BJ (cell line): ENCODE measurements at regions of chr21 and their contacts with region 1.

Region 1: GRCh38 chr21:26307640-26308039 is 137.1 kb upstream of the APP start:
- DNase-seq: no peak
- H3K4me3 ChIP-seq: no peak overlapping the region
- H3K27me3 ChIP-seq: no peaks in the 10 kb centered on the region
- CTCF ChIP-seq: no peak

Region 2: DNA sequence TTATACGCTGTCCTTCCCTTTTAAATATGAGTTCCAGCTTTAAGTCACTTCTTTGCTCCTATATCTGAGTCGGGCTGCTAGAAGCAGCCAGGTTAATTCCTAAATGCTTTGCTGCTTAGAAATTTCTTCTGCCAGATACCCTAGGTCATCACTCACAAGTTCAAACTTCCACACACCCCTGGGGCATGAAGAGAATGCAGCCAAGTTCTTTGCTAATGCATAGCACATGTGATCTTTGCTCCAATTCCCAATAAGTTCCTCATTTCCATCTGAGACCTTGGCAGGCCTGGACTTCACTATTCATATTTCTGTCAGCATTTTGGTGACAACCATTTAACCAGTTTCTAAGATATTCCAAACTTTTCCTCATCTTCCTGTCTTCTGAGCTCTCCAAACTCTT is 122.6 kb before region 1 on chr21:
- CTCF ChIA-PET with region 1: no interaction called
- POLR2A ChIA-PET with region 1: no interaction called
- DNase-seq: no peak
- H3K4me3 ChIP-seq: no peak overlapping the region
- H3K27me3 ChIP-seq: no peaks in the 10 kb centered on the region
- CTCF ChIP-seq: no peak

Region 3: GRCh38 chr21:26280148-26280547 is 27.5 kb before region 1 on chr21:
- CTCF ChIA-PET with region 1: no interaction called
- POLR2A ChIA-PET with region 1: interaction called, 12 read pairs
- DNase-seq: no peak
- H3K4me3 ChIP-seq: no peak overlapping the region
- H3K27me3 ChIP-seq: peaks cover 4% of the 10 kb centered on the region; the same call in 1 of the 2 replicates
- CTCF ChIP-seq: no peak